OCI-LY7 (cell line): ENCODE measurements at regions of chr12 and their contacts with region 1.

Region 1: GRCh38 chr12:116818948-116819832 is 62.1 kb downstream of the HRK start:
- DNase-seq: peak; percentile 90
- H3K4me3 ChIP-seq: peak overlapping the region; percentile 82
- H3K27ac ChIP-seq: peak overlapping the region; percentile 78
- H3K4me1 ChIP-seq: peaks cover 56% of the 10 kb centered on the region
- CTCF ChIP-seq: no peak

Region 2: GRCh38 chr12:116737774-116738700 is 81.2 kb before region 1 on chr12 and contains the starts of genes RNFT2 and SPRING1:
- CTCF ChIA-PET with region 1: no interaction called
- POLR2A ChIA-PET with region 1: interaction called, 3 read pairs
- intact Hi-C with region 1: loop called (anchors 1 kb)
- DNase-seq: peak; percentile 99
- H3K4me3 ChIP-seq: peak within 1 kb of the TSS; percentile 81
- H3K27ac ChIP-seq: peak within 1 kb of the TSS; percentile 65
- H3K4me1 ChIP-seq: peaks cover 17% of the 10 kb centered on the region
- CTCF ChIP-seq: peak; percentile 64
- total RNA-seq, gene RNFT2: 34.3 and 40.2 TPM in 2 replicates
- total RNA-seq, gene SPRING1: 51.2 and 75.5 TPM in 2 replicates

Region 3: GRCh38 chr12:116803013-116803736 is 16.0 kb before region 1 on chr12:
- CTCF ChIA-PET with region 1: interaction called, 4 read pairs
- POLR2A ChIA-PET with region 1: interaction called, 60 read pairs
- intact Hi-C with region 1: loop called (anchors 1 kb)
- DNase-seq: peak; percentile 98
- H3K4me3 ChIP-seq: peak overlapping the region; percentile 55
- H3K27ac ChIP-seq: peak overlapping the region; percentile 100
- H3K4me1 ChIP-seq: peaks cover 76% of the 10 kb centered on the region
- CTCF ChIP-seq: no peak

Region 4: GRCh38 chr12:116861320-116861719 is 42.1 kb after region 1 on chr12:
- CTCF ChIA-PET with region 1: interaction called, 3 read pairs
- POLR2A ChIA-PET with region 1: interaction called, 5 read pairs
- intact Hi-C with region 1: loop called (anchors 1 kb)
- DNase-seq: peak; percentile 92
- H3K4me3 ChIP-seq: peak overlapping the region; percentile 54
- H3K27ac ChIP-seq: peak overlapping the region; percentile 91
- H3K4me1 ChIP-seq: peaks cover 80% of the 10 kb centered on the region
- CTCF ChIP-seq: no peak

Region 5: GRCh38 chr12:116977465-116978380 is 158.5 kb after region 1 on chr12:
- CTCF ChIA-PET with region 1: no interaction called
- POLR2A ChIA-PET with region 1: interaction called, 8 read pairs
- intact Hi-C with region 1: loop called (anchors 5 kb)
- DNase-seq: peak; percentile 77
- H3K4me3 ChIP-seq: peak overlapping the region; percentile 66
- H3K27ac ChIP-seq: peak overlapping the region; percentile 87
- H3K4me1 ChIP-seq: peaks cover 56% of the 10 kb centered on the region
- CTCF ChIP-seq: no peak